Heart left ventricle (tissue), 16 donors: ENCODE measurements at regions of chr17 and their contacts with region 1.

Region 1: GRCh38 chr17:10875979-10876555 is 38.2 kb upstream of the PIRT start:
- DNase-seq: peak in 3 of 5 donors; percentile 13 to 41 (median 18)
- ATAC-seq: peak in 1 of 4 donors; percentile 41
- H3K4me3 ChIP-seq: no peak overlapping the region
- H3K27ac ChIP-seq: no peak overlapping the region
- H3K4me1 ChIP-seq: no peaks in the 10 kb centered on the region
- H3K27me3 ChIP-seq: peaks cover 0 to 30% (median 0%) of the 10 kb centered on the region in 9 donors
- CTCF ChIP-seq: peak; percentile 53 to 74 (median 66)
- POLR2A ChIP-seq: no peak

Region 2: DNA sequence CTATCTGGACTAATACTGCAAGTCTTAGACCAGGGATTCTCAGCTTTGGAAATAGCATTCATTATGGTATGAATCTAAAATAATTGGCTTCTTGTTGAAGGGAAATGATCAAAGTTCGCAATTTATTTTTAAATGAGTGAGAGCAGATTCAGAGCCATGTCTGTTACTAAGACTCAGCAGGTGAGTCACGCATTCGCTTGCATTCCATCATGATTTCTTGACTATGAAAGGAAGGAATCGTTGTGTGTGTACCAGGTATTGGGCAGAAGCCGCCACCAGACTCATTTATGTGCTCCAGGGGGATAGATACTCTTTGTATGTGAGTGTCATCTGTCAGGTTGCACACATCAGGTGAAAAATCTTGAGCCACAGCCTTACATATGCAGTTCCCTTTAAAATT is 1065.0 kb before region 1 on chr17:
- intact Hi-C with region 1: no loop called
- DNase-seq: no peak
- ATAC-seq: no peak
- H3K4me3 ChIP-seq: no peak overlapping the region
- H3K27ac ChIP-seq: no peak overlapping the region
- H3K4me1 ChIP-seq: peaks cover 0 to 24% (median 0%) of the 10 kb centered on the region in 12 donors
- H3K27me3 ChIP-seq: peaks cover 0 to 13% (median 0%) of the 10 kb centered on the region in 9 donors
- CTCF ChIP-seq: no peak
- POLR2A ChIP-seq: no peak

Region 3: DNA sequence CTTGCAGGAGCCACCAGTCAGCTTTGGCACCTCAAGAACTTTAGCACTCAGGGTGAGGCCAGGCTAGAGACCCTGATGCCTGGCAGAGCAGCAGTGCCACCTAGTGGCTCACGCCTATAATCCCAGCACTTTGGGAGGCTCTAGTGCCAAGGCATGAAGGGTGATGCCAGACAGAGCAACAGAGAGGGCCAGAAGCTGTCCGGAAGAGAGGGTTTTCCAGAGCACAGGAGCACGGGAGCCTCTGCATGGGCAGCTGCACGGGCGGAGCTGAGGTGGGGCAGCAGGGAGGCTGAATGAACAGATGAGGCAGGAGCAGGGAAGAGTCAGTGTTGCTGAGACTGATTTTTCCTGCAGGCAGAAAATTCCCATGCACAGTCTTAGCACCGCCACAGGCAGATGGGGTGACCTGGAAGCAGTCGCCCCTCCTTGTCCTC is 257.8 kb before region 1 on chr17:
- intact Hi-C with region 1: no loop called
- DNase-seq: peak in 4 of 5 donors; percentile 39 to 66 (median 44)
- ATAC-seq: peak; percentile 73 to 91 (median 90)
- H3K4me3 ChIP-seq: no peak overlapping the region
- H3K27ac ChIP-seq: no peak overlapping the region
- H3K4me1 ChIP-seq: peaks cover 0 to 15% (median 0%) of the 10 kb centered on the region in 12 donors
- H3K27me3 ChIP-seq: no peaks in the 10 kb centered on the region
- CTCF ChIP-seq: peak; percentile 75 to 89 (median 82)
- POLR2A ChIP-seq: no peak

Region 4: GRCh38 chr17:11144358-11145233 is 268.5 kb after region 1 on chr17:
- intact Hi-C with region 1: loop called (anchors 2 to 5 kb)
- DNase-seq: peak in 2 of 5 donors; percentile 25 to 36
- ATAC-seq: peak in 3 of 4 donors; percentile 52 to 62 (median 57)
- H3K4me3 ChIP-seq: no peak overlapping the region
- H3K27ac ChIP-seq: no peak overlapping the region
- H3K4me1 ChIP-seq: no peaks in the 10 kb centered on the region
- H3K27me3 ChIP-seq: peaks cover 0 to 9% (median 0%) of the 10 kb centered on the region in 9 donors
- CTCF ChIP-seq: peak in 11 of 12 donors; percentile 45 to 75 (median 62)
- POLR2A ChIP-seq: no peak

Region 5: DNA sequence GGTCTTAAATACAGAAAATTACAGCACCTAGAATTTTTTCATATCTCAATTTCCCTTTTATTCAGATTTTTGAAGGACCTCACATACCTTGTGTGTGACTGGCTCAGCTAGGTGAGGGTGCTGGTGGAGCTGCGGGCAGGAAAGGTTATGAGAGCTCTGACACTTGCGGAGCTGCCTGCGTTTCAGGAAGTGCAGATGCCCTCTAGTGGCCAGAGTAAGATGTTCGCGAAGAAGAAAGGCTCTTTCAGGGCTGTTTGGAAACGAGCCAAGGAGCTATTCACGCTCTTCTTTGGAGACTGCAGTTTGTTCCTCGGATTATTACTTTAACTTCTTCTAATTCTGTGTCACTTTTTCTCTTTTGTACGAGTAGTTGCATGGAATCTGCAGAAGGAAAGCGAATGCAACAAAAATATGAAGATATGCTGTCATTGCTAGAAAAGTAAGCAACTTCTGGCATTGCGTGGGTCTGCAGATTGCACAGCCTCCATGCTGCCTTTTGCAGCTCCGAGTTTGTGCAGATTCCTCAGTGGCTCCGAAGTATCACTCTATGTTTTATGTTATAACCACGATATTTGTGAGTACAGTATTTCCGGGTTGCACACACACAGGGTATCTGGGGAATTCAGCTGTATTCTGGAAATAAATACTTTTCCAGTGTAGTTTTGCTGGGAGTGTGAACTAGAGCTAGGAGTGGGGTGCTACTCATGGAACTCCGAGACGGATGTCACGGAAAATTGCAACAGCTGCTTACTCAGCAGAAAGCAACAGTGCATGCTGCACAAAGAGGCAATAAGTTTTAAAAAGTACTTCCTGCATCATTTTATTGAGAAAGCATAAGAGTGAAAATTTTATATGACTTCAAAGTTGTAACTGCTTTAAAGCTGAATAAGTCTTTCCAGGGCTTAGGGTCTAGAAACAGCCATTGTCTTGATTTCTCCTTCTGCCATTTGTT is 768.5 kb after region 1 on chr17:
- intact Hi-C with region 1: loop called in 5 of 10 experiments (anchors 10 kb)
- DNase-seq: peak in 4 of 5 donors; percentile 49 to 73 (median 67)
- ATAC-seq: peak in 3 of 4 donors; percentile 60 to 81 (median 64)
- H3K4me3 ChIP-seq: peak overlapping the region in 4 of 12 donors; percentile 0 to 15 (median 10)
- H3K27ac ChIP-seq: no peak overlapping the region
- H3K4me1 ChIP-seq: peaks cover 0 to 7% (median 0%) of the 10 kb centered on the region in 12 donors
- H3K27me3 ChIP-seq: peaks cover 0 to 9% (median 0%) of the 10 kb centered on the region in 9 donors
- CTCF ChIP-seq: peak; percentile 67 to 89 (median 82)
- POLR2A ChIP-seq: no peak

Region 6: DNA sequence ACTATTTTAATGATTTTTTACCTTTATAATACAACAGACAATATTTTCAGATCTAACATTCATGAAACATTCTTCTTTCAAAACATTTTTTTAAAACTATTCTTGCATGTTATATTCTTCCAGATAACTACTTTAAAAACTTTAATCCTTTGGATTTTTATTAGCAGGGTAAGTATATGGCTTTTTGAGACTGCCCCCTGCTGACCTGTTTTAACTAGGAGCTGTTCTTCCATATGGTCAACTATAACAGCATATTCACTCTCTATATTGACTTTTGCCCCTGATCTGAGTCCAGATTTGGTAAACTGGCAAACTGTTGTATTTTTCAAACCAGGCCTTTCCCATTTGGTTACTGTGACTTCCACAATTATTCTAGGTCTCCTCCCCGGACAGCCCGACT is 1104.7 kb after region 1 on chr17:
- intact Hi-C with region 1: loop called (anchors 2 to 10 kb)
- DNase-seq: no peak
- ATAC-seq: no peak
- H3K4me3 ChIP-seq: no peak overlapping the region
- H3K27ac ChIP-seq: no peak overlapping the region
- H3K4me1 ChIP-seq: no peaks in the 10 kb centered on the region
- H3K27me3 ChIP-seq: no peaks in the 10 kb centered on the region
- CTCF ChIP-seq: peak in 4 of 12 donors; percentile 7 to 30 (median 21)
- POLR2A ChIP-seq: no peak